AG04449 (cell line): ENCODE measurements at regions of chr9 and their contacts with region 1.

Region 1: DNA sequence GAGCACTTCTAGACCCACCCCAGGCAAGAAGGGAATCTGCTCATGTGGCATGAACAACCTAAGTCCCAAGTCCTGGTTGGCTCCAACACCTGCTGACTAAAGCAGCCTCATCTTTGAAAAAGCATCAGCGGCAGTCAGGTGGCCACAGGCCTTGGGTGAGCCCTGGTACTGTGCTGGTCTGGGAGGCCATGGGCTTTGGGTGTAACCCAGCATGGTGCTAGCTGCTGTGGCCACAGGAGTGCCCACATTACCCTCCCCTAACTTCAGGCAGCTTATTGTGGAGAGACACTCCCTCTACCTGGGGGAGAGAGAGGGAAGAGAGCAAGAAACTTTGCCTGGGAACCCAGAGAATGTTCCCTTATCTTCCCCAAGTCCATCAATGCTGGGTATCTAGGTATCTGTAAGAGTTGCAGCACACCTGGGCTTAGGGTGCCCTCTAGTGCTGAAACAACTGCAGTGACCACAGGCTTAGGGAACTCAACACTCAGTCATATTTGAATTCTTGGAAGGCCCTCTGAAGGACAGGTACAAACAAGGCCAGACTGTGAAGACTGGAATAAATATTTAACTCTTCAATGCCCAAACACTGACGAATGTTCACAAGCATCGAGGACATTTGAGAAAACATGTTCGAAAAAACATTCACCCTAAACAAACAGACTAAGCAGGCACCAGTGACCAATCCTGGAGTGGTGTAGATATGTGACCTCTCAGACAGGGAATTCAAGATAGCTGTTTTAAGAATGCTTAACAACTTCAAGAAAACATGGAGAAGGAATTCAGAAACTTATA is 69.9 kb upstream of the OR2K2 start:
- DNase-seq: no peak
- H3K4me3 ChIP-seq: no peak overlapping the region
- CTCF ChIP-seq: peak; percentile 8

Region 2: DNA sequence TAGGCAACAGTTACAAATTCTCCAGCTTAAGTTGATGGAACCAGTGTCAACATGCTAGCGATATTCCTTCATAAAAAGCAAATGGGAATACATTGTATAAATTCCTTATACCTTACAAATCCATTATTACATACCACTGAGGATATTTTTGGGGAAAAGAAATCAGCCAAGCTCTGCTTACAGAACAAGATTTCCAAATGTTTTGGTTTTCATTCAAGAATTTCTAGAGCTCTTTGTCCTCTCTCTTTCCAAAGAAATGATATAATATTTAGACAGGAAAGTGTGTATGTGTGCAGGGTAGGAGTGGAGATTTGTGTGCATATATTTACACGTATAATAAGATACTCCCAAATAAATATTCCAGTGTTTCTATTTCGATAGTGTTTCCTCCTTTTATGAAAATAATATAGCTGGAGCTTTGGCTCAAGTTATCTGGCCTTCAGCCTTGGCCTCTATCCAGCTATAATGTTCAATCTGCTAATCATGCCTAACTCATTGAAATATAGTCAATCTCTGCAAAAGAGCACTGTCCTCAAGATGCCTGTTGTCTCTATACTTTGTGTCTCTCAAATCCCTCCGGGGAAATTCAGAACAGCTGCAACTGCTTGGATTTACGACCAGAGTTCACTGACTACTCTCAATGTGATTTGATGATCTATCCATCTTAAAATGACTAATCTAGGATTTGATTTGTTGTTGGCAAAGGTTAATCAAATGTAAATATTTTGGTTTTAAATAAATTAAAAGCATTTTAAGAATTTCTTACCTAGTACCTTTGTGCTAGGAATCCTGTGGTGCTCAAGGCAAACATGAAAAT is 861.5 kb before region 1 on chr9:
- CTCF ChIA-PET with region 1: no interaction called
- POLR2A ChIA-PET with region 1: no interaction called
- DNase-seq: peak; percentile 59
- H3K4me3 ChIP-seq: no peak overlapping the region
- CTCF ChIP-seq: no peak

Region 3: DNA sequence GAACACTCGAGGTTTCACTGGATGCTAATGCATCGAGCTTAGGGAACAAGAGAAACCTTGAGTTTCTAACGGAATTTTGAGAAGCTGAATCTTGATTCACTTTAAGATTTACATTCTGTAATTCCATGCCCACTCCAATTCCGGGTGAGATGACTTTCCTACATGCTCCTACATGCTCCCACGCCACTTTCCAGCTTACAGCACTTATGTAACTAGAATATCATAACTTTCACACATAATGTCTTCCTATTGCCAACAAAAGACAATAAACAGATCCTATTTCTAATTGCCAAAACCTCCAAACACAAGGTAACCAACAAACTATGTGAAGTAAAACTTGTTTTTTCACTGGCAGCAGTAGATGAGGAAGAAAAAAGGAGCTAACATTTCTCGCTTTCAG is 11.3 kb after region 1 on chr9:
- CTCF ChIA-PET with region 1: interaction called, 10 read pairs
- POLR2A ChIA-PET with region 1: no interaction called
- DNase-seq: no peak
- H3K4me3 ChIP-seq: no peak overlapping the region
- CTCF ChIP-seq: no peak

Region 4: GRCh38 chr9:111491372-111491771 is 91.4 kb after region 1 on chr9:
- CTCF ChIA-PET with region 1: no interaction called
- POLR2A ChIA-PET with region 1: no interaction called
- DNase-seq: no peak
- H3K4me3 ChIP-seq: no peak overlapping the region
- CTCF ChIP-seq: no peak